ENCODE measurements at regions of chr10 and their contacts with region 1.

Region 1: DNA sequence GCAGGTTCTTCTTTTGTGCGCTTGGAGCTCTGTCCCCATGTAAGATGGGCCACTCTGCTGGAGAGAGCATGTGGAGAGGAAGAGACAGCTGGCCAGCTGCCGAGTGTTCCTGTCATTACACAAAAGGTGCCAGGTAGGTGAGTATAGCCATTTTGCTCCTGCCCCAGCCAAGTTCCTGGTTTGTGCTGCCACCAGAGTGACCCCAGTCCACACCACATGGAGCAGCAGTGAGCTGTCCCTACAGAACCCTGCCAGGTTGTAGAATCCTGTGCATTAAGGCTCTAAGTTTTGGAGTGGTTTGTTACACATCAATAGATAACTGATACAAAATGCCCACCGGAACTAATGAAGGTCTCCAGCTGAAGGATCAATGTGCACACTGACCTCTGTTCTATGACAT is 84.6 kb upstream of the GHITM start:
- DNase-seq: no peak
- ATAC-seq: no peak
- H3K4me3 ChIP-seq: no peak overlapping the region
- H3K4me3 Mint-ChIP-seq: no peak overlapping the region
- H3K27ac ChIP-seq: no peak overlapping the region
- H3K27ac Mint-ChIP-seq: no peak overlapping the region
- H3K4me1 ChIP-seq: no peaks in the 10 kb centered on the region
- H3K4me1 Mint-ChIP-seq: no peaks in the 10 kb centered on the region
- H3K27me3 ChIP-seq: no peaks in the 10 kb centered on the region
- H3K27me3 Mint-ChIP-seq: peaks cover 6 to 15% of the 10 kb centered on the region in 2 donors

Region 2: DNA sequence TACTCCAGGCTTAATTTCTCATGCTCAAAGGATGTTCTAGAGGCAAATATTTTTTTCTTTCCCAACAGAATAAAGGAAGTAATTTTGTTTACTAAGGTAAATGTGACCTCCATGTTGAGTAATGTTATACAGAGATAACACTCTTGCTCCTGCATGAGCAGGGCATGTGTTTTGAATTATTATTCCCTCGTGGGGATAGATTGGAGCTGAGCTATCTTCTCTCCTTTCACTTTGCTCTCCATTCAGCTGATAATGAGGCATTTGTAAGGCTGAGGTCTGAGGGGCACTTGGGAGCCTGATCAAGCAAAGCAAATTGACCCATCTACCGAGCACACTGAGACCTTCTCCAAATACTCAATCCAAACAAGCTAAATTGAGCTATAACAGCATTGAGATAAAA is 33.9 kb after region 1 on chr10:
- CTCF ChIA-PET with region 1: interaction called in 1 of 2 experiments, 14 read pairs
- POLR2A ChIA-PET with region 1: no interaction called
- DNase-seq: no peak
- ATAC-seq: no peak
- H3K4me3 ChIP-seq: no peak overlapping the region
- H3K4me3 Mint-ChIP-seq: no peak overlapping the region
- H3K27ac ChIP-seq: no peak overlapping the region
- H3K27ac Mint-ChIP-seq: no peak overlapping the region
- H3K4me1 ChIP-seq: no peaks in the 10 kb centered on the region
- H3K4me1 Mint-ChIP-seq: no peaks in the 10 kb centered on the region
- H3K27me3 ChIP-seq: peaks cover 0 to 6% of the 10 kb centered on the region in 2 experiments
- H3K27me3 Mint-ChIP-seq: peaks cover 39 to 41% of the 10 kb centered on the region in 2 donors

Measured in T-cell (primary cell).